ENCODE measurements at regions of chr22 and their contacts with region 1.

Region 1: GRCh38 chr22:35399678-35400334 is at the start of gene MCM5:
- DNase-seq: peak; percentile 99
- H3K4me3 Mint-ChIP-seq: peak within 1 kb of the TSS; percentile 100
- H3K27ac Mint-ChIP-seq: peak within 1 kb of the TSS; percentile 97
- H3K4me1 Mint-ChIP-seq: peaks cover 52% of the 10 kb centered on the region
- H3K27me3 Mint-ChIP-seq: no peaks in the 10 kb centered on the region
- total RNA-seq, gene MCM5: 190 to 195 TPM

Region 2: DNA sequence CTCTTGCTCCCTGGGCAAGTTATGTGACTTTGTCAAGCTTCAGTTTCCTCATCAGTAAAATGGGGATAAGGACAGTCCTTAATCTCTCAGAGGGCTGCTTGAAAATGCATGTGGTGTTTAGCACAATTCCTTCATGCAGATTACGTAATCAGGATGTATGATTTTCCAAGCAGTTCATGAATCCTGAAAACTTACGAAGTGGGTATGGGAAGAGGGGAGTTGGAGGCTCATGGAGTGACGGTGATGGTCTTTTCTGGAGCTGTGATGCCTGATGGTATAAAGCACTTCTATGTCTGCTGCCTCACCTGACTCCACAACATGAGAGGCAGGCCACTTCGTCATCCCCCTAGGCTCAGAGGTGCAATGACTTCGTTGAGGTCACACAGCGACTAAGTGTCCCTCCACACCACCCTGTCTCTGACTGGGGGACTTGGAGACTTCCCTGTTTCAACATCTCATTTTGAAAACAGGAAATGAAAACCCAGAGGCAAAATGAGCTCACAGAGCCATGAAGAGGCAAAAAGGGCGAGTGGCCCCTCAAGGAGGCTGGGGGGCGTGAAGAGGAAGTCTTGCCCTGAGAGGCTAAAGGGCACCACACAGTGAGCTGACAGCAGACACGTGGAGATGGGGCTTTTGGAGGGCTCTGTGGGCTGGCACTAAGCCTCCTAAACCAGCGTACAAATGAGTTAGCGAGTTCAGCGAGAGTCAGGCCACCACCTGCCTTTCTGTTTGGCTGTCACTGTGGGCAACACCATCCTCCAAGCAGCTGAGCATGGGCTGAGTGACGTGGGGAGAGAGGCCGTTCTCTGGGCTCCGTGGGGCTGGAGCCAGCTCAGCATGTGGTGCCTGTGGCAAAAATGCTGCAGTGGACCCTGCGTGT is 10.2 kb after region 1 on chr22:
- CTCF ChIA-PET with region 1: no interaction called
- POLR2A ChIA-PET with region 1: interaction called, 32 read pairs
- DNase-seq: no peak
- H3K4me3 Mint-ChIP-seq: no peak overlapping the region
- H3K27ac Mint-ChIP-seq: peak overlapping the region; percentile 44
- H3K4me1 Mint-ChIP-seq: peaks cover 27% of the 10 kb centered on the region
- H3K27me3 Mint-ChIP-seq: no peaks in the 10 kb centered on the region

Region 3: GRCh38 chr22:35697142-35697541 is 297.3 kb after region 1 on chr22:
- CTCF ChIA-PET with region 1: no interaction called
- POLR2A ChIA-PET with region 1: no interaction called
- DNase-seq: peak; percentile 46
- H3K4me3 Mint-ChIP-seq: no peak overlapping the region
- H3K27ac Mint-ChIP-seq: no peak overlapping the region
- H3K4me1 Mint-ChIP-seq: no peaks in the 10 kb centered on the region
- H3K27me3 Mint-ChIP-seq: no peaks in the 10 kb centered on the region

Measured in activated CD4-positive, alpha-beta memory T cell treated with anti-CD3 and anti-CD28 coated beads, Interleukin-2, amount 10 ng/mL, durations not matched to agents 7 days and 5 days (primary cell).